BJ (cell line): ENCODE measurements at regions of chr1 and their contacts with region 1.

Region 1: GRCh38 chr1:171965777-171966176 is 124.5 kb downstream of the DNM3 start:
- DNase-seq: no peak
- H3K4me3 ChIP-seq: no peak overlapping the region
- H3K27me3 ChIP-seq: no peaks in the 10 kb centered on the region
- CTCF ChIP-seq: no peak

Region 2: GRCh38 chr1:171833091-171833825 is 132.5 kb before region 1 on chr1:
- CTCF ChIA-PET with region 1: no interaction called
- POLR2A ChIA-PET with region 1: no interaction called
- DNase-seq: no peak
- H3K4me3 ChIP-seq: no peak overlapping the region
- H3K27me3 ChIP-seq: 0 out of 2 replicates have a peak, but pooled peaks cover 2% of the 10 kb centered on the region
- CTCF ChIP-seq: no peak

Region 3: DNA sequence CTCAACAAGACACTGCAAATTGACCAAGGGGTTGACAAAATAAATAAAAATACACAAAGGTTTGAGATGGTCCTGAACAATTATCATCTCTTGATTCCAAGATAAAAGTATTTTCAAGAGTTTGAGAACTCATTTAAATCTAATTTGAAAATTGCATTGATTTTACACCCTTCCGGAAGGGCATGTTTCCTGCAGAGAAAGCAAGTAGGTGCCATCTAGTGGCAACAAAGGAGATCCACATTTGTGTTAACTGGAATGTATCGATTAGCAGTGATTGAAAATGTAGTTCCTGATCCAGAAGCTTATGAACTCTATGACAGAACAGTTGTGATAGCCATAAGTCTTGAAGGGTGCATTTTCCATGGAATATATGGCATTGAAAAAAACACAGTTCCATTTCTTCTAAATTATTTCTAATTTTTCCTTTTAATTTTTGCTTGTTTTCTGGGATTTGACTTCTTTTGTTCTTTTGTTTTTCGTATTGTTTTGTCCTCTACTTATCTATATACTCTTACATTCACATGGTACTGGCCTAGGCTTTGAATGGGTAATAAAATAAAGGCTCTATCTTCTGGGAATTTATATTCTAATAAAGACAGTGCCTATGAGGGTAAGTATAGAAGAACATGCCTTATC is 19.2 kb after region 1 on chr1:
- CTCF ChIA-PET with region 1: interaction called, 20 read pairs
- POLR2A ChIA-PET with region 1: no interaction called
- DNase-seq: no peak
- H3K4me3 ChIP-seq: no peak overlapping the region
- H3K27me3 ChIP-seq: no peaks in the 10 kb centered on the region
- CTCF ChIP-seq: peak; percentile 74

Region 4: GRCh38 chr1:172002725-172003345 is 37.1 kb after region 1 on chr1:
- CTCF ChIA-PET with region 1: no interaction called
- POLR2A ChIA-PET with region 1: no interaction called
- DNase-seq: no peak
- H3K4me3 ChIP-seq: no peak overlapping the region
- H3K27me3 ChIP-seq: no peaks in the 10 kb centered on the region
- CTCF ChIP-seq: peak; percentile 77